ENCODE measurements at regions of chr1 and their contacts with region 1.

Region 1: DNA sequence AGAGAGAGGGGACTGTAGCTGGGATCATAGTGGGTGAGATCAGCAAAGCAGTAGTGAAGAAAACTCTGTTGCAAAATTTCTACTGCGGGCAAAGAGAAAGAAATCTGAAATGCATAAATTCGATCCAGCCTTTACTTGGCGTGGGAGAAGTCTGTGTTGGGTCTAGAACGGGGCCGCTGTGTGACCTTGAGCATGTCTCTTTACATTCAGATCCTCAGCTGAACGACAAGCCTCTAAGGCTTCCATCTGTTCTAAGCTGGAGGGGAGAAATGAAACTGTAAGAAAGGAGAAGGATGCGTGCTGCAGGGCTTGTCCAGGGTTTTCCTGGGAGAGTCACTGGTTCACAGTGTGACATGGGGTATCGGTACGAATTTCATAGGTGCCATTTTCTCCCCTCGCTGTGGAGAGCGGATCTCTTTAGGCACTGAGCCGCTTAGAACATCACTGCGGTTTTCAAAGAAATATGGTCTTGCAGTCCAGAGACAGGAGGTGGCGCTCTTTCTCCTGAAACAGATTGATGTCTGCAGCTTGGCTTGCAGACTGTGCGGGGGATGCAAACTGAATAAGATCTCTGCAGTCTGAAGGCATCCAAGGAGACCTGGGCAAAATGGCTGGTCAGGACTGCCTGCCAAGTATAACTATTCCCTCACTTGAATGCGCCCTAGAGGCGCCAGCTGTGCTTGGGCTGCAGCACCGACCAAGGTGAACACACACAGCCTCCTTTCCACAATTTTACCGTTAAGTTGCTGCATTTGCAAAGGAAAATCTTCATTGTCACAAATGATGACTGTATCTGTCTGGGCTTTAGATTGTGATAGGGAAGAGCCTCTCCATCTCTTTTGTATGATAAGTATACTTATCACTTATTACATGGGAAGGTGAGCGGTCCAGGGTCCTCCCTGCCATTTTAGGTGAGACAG is 104.1 kb downstream of the XCL2 start:
- DNase-seq: peak; percentile 84
- ATAC-seq: peak; percentile 98
- H3K4me3 ChIP-seq: peak overlapping the region; percentile 24; the same call in 1 of the 2 replicates
- H3K27ac ChIP-seq: no peak overlapping the region
- H3K4me1 ChIP-seq: no peaks in the 10 kb centered on the region
- H3K27me3 ChIP-seq: peaks cover 5% of the 10 kb centered on the region; the same call in 1 of the 2 replicates
- CTCF ChIP-seq: peak; percentile 89
- POLR2A ChIP-seq: no peak
- RAD21 ChIP-seq: peak; percentile 93

Region 2: GRCh38 chr1:168279253-168279652 is 160.5 kb before region 1 on chr1:
- CTCF ChIA-PET with region 1: no interaction called
- POLR2A ChIA-PET with region 1: no interaction called
- dilution Hi-C with region 1: no loop called
- in situ Hi-C with region 1: no loop called
- intact Hi-C with region 1: no loop called
- DNase-seq: no peak
- ATAC-seq: no peak
- H3K4me3 ChIP-seq: no peak overlapping the region
- H3K27ac ChIP-seq: no peak overlapping the region
- H3K4me1 ChIP-seq: peaks cover 4% of the 10 kb centered on the region
- H3K27me3 ChIP-seq: no peaks in the 10 kb centered on the region
- CTCF ChIP-seq: no peak
- POLR2A ChIP-seq: no peak
- RAD21 ChIP-seq: no peak

Region 3: GRCh38 chr1:168550976-168551375 is 111.3 kb after region 1 on chr1:
- CTCF ChIA-PET with region 1: interaction called, 4 read pairs
- POLR2A ChIA-PET with region 1: no interaction called
- dilution Hi-C with region 1: no loop called
- in situ Hi-C with region 1: no loop called
- intact Hi-C with region 1: loop called (anchors 1 kb)
- DNase-seq: no peak
- ATAC-seq: no peak
- H3K4me3 ChIP-seq: no peak overlapping the region
- H3K27ac ChIP-seq: no peak overlapping the region
- H3K4me1 ChIP-seq: no peaks in the 10 kb centered on the region
- H3K27me3 ChIP-seq: no peaks in the 10 kb centered on the region
- CTCF ChIP-seq: no peak
- POLR2A ChIP-seq: no peak
- RAD21 ChIP-seq: no peak

Region 4: GRCh38 chr1:168572633-168573032 is 132.9 kb after region 1 on chr1:
- CTCF ChIA-PET with region 1: interaction called, 3 read pairs
- POLR2A ChIA-PET with region 1: no interaction called
- dilution Hi-C with region 1: no loop called
- in situ Hi-C with region 1: loop called (anchors 5 kb)
- intact Hi-C with region 1: loop called (anchors 1 kb)
- DNase-seq: no peak
- ATAC-seq: no peak
- H3K4me3 ChIP-seq: no peak overlapping the region
- H3K27ac ChIP-seq: no peak overlapping the region
- H3K4me1 ChIP-seq: no peaks in the 10 kb centered on the region
- H3K27me3 ChIP-seq: peaks cover 3% of the 10 kb centered on the region; the same call in 1 of the 2 replicates
- CTCF ChIP-seq: no peak
- POLR2A ChIP-seq: no peak
- RAD21 ChIP-seq: no peak

Region 5: GRCh38 chr1:169348383-169349036 is 908.8 kb after region 1 on chr1:
- CTCF ChIA-PET with region 1: interaction called, 5 read pairs
- POLR2A ChIA-PET with region 1: no interaction called
- dilution Hi-C with region 1: no loop called
- in situ Hi-C with region 1: loop called (anchors 10 kb)
- intact Hi-C with region 1: loop called (anchors 1 kb)
- DNase-seq: peak; percentile 68
- ATAC-seq: peak; percentile 62; the same call in 1 of the 2 replicates
- H3K4me3 ChIP-seq: no peak overlapping the region
- H3K27ac ChIP-seq: no peak overlapping the region
- H3K4me1 ChIP-seq: no peaks in the 10 kb centered on the region
- H3K27me3 ChIP-seq: no peaks in the 10 kb centered on the region
- CTCF ChIP-seq: peak; percentile 86
- POLR2A ChIP-seq: no peak
- RAD21 ChIP-seq: peak; percentile 90